ENCODE measurements at regions of chr20 and their contacts with region 1.

Region 1: DNA sequence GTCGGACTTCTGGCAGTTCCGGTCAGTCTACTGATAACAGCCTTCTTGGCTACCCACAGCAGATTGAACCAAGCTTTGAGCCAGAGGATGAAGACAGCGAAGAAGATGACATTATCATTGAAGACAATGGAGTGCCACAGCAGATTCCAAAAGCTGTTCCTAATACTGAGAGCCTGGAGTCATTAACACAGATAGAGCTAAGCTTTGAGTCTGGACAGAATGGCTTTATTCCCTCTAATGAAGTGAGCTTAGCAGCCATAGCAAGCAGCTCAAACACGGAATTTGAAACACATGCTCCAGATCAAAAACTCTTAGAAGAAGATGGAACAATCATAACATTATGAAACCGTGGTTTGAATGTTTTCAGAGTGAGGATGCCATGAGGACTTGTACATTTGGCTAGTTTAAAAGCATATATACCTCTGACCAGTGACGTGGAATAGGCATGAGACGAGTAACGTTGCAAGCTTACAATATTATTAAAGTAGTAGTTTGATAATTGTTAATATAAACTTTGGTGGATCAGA is 18.8 kb downstream of the PARD6B start:
- DNase-seq: no peak
- H3K4me3 Mint-ChIP-seq: no peak overlapping the region
- H3K27ac Mint-ChIP-seq: no peak overlapping the region
- H3K4me1 Mint-ChIP-seq: peaks cover 26% of the 10 kb centered on the region
- H3K27me3 Mint-ChIP-seq: no peaks in the 10 kb centered on the region

Region 2: GRCh38 chr20:50625986-50626677 is 124.1 kb before region 1 on chr20:
- CTCF ChIA-PET with region 1: interaction called, 20 read pairs
- intact Hi-C with region 1: loop called (anchors 1 kb)
- DNase-seq: peak; percentile 37
- H3K4me3 Mint-ChIP-seq: no peak overlapping the region
- H3K27ac Mint-ChIP-seq: no peak overlapping the region
- H3K4me1 Mint-ChIP-seq: no peaks in the 10 kb centered on the region
- H3K27me3 Mint-ChIP-seq: no peaks in the 10 kb centered on the region

Region 3: GRCh38 chr20:50663095-50663850 is 86.9 kb before region 1 on chr20:
- CTCF ChIA-PET with region 1: interaction called, 18 read pairs
- intact Hi-C with region 1: loop called (anchors 1 kb)
- DNase-seq: peak; percentile 41
- H3K4me3 Mint-ChIP-seq: no peak overlapping the region
- H3K27ac Mint-ChIP-seq: no peak overlapping the region
- H3K4me1 Mint-ChIP-seq: no peaks in the 10 kb centered on the region
- H3K27me3 Mint-ChIP-seq: no peaks in the 10 kb centered on the region

Region 4: DNA sequence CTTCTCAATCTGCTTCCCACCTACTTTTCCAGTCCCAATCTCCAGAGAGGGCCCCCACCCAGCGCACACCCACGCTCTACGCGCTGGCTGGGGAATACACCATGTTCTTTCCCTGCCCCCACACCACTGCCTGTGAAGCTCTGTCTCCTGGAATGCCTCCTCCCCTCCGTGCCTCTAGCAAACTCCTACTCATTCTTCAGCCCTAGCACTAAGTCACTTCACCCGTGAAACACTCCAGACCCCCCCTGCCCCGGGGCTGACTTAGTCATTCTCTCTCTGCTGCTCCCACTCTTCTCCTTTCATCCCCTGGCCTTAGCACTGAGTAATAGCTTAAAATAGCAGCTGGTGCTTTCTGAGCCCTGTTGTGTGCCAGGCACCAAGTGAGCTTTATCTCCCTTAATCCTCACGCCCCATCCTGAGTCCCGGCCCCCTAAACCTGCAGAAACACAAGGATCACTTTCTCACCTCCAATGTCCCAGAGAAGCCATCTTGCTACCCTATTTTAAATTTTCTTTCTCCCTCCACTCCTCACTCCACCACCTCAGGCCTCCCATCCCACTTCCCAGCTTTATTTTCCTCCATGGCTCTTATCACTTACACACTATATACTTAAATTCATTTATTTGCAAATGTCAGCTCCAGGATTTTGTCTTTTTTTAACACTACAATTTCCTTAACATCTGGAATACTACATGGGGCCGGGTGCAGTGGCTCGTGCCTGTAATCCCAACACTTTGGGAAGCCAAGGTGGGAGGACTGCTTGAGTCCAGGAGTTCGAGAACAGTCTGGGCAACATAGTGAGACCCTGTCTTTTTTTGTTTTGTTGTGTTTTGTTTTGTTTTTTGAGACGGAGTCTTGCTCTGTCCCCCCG is 25.1 kb before region 1 on chr20:
- CTCF ChIA-PET with region 1: interaction called, 21 read pairs
- intact Hi-C with region 1: no loop called
- DNase-seq: peak; percentile 91
- H3K4me3 Mint-ChIP-seq: no peak overlapping the region
- H3K27ac Mint-ChIP-seq: no peak overlapping the region
- H3K4me1 Mint-ChIP-seq: peaks cover 13% of the 10 kb centered on the region
- H3K27me3 Mint-ChIP-seq: no peaks in the 10 kb centered on the region

Region 5: GRCh38 chr20:50943069-50943468 is 192.9 kb after region 1 on chr20:
- CTCF ChIA-PET with region 1: no interaction called
- intact Hi-C with region 1: no loop called
- DNase-seq: no peak
- H3K4me3 Mint-ChIP-seq: no peak overlapping the region
- H3K27ac Mint-ChIP-seq: no peak overlapping the region
- H3K4me1 Mint-ChIP-seq: no peaks in the 10 kb centered on the region
- H3K27me3 Mint-ChIP-seq: no peaks in the 10 kb centered on the region

Region 6: DNA sequence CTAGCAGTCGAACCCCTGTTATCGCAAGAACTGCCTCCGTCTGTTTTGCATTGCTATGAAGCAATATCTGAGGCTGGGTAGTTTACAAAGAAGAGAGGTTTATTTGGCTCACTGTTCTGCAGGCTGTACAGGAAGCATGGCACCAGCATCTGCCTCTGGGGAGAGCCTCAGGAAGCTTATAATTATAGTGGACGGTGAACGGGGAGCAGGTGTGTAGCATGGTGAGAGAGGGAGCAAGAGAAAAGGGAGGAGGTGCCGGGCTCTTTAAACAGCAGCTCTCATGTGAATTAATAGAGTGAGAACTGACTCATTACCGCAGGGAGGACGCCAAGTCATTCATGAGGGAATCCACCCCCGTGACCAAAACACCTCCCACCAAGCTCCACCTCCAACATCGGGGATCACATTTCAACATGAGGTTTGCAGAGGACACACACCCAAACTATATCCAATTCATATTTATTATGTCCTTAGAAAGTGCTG is 445.3 kb after region 1 on chr20:
- CTCF ChIA-PET with region 1: no interaction called
- intact Hi-C with region 1: no loop called
- DNase-seq: no peak
- H3K4me3 Mint-ChIP-seq: no peak overlapping the region
- H3K27ac Mint-ChIP-seq: no peak overlapping the region
- H3K4me1 Mint-ChIP-seq: no peaks in the 10 kb centered on the region
- H3K27me3 Mint-ChIP-seq: peaks cover 2% of the 10 kb centered on the region

Measured in activated naive CD4-positive, alpha-beta T cell treated with anti-CD3 and anti-CD28 coated beads for 36 hours (primary cell).